ENCODE measurements at regions of chr19 and their contacts with region 1.

Region 1: GRCh38 chr19:38152461-38153379 is 71.3 kb downstream of the DPF1 start:
- DNase-seq: no peak
- CTCF ChIP-seq: no peak

Region 2: DNA sequence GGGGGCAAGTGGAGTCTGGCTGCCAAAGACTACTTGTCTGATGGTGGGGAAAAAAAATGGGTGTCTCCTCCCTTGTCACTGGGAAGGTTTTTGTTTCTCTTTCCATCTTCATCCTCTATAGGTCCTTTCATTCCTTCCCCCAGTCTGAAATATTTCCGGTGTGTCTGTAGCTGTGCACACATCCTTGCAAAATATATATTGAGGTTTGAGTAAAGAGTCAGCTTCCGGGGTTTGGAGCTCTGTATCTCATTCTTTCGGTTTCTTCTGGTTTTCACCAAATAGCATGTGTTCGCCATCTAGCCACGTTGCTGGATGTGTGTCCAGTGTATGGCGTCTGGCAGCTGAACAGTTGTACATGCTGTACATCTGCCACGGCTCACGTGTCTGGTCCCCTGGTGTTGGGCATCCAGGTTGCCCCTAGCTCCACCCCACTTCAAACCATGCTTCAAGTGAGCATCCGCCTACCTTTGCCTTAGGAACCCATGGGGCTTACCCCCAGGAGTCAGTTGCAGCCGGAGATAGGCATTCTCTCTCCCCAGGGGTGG is 103.5 kb before region 1 on chr19:
- CTCF ChIA-PET with region 1: no interaction called
- POLR2A ChIA-PET with region 1: no interaction called
- DNase-seq: peak; percentile 76
- CTCF ChIP-seq: no peak

Region 3: GRCh38 chr19:38142176-38143035 is 10.3 kb before region 1 on chr19:
- CTCF ChIA-PET with region 1: interaction called, 20 read pairs
- POLR2A ChIA-PET with region 1: no interaction called
- DNase-seq: peak; percentile 65
- CTCF ChIP-seq: peak; percentile 58

Region 4: DNA sequence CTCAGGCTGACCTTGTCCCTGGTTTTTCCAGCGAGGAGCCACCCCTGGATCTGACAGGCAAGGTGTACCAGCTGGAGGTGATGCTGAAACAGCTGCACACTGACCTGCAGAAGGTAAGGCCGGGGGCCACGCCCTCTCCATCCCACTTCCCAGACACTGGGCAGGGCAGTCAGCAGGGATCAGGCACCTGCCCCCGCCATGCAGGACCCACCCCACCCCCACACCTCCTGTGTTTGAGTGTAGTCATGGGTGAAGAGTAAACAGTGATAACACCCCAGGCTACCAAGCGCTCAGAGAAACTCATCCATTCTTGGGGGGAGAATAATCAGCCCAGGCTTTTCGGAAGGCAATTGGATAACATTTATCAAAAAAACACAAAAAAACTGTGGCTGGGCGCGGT is 51.4 kb after region 1 on chr19:
- CTCF ChIA-PET with region 1: no interaction called
- POLR2A ChIA-PET with region 1: no interaction called
- DNase-seq: no peak
- CTCF ChIP-seq: no peak

Region 5: GRCh38 chr19:38243279-38243656 is 90.5 kb after region 1 on chr19:
- CTCF ChIA-PET with region 1: no interaction called
- POLR2A ChIA-PET with region 1: no interaction called
- DNase-seq: no peak
- CTCF ChIP-seq: no peak

Measured in GM10248 (cell line).